Heart right ventricle (tissue), 16 donors: ENCODE measurements at regions of chr3 and their contacts with region 1.

Region 1: DNA sequence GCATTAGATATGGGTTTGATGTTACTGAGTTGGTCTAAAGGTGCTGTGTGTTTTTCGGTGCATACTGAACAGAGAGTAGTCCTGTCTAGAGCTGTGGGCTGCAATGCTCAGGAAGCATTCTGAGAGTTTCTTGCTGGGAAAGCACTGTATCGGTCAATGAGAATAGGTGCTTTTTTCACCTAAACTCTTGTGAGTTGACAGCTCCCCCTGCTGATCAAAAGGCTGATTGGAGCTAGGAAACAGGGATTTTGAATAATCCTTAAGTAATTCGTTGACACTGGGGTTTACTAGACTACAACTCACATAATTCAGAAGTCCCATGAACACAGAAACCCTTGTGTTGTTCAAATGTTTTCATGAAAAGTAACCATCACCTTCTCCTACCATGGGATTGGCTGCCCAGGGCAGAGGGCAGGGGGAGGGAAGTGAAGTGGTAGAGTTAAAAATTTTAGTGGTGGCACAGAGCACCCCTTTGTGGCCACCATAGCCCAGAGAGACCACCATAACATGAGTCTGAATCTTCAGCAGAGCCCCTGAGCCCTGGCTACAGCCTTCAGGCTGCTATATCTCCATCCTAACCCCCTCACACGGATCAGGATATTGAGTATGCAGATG is 13.0 kb upstream of the MANF start:
- DNase-seq: no peak
- ATAC-seq: peak in 3 of 8 donors; percentile 27 to 46 (median 44)
- H3K4me3 ChIP-seq: no peak overlapping the region
- H3K27ac ChIP-seq: no peak overlapping the region
- H3K4me1 ChIP-seq: no peaks in the 10 kb centered on the region
- H3K27me3 ChIP-seq: peaks cover 0 to 4% (median 0%) of the 10 kb centered on the region in 7 donors
- CTCF ChIP-seq: peak; percentile 16 to 71 (median 62)

Region 2: GRCh38 chr3:50568947-50569749 is 802.9 kb before region 1 on chr3 and contains the start of gene HEMK1:
- intact Hi-C with region 1: loop called in 1 of 10 experiments (anchors 5 kb)
- DNase-seq: peak; percentile 98 to 99
- ATAC-seq: peak; percentile 85 to 95 (median 90)
- H3K4me3 ChIP-seq: peak within 1 kb of the TSS; percentile 35 to 92 (median 78)
- H3K27ac ChIP-seq: peak within 1 kb of the TSS; percentile 85 to 95 (median 92)
- H3K4me1 ChIP-seq: peaks cover 11 to 69% (median 47%) of the 10 kb centered on the region in 9 donors
- H3K27me3 ChIP-seq: no peaks in the 10 kb centered on the region
- CTCF ChIP-seq: no peak
- total RNA-seq, gene HEMK1: 10.6 to 19.0 (median 14.8) TPM

Region 3: DNA sequence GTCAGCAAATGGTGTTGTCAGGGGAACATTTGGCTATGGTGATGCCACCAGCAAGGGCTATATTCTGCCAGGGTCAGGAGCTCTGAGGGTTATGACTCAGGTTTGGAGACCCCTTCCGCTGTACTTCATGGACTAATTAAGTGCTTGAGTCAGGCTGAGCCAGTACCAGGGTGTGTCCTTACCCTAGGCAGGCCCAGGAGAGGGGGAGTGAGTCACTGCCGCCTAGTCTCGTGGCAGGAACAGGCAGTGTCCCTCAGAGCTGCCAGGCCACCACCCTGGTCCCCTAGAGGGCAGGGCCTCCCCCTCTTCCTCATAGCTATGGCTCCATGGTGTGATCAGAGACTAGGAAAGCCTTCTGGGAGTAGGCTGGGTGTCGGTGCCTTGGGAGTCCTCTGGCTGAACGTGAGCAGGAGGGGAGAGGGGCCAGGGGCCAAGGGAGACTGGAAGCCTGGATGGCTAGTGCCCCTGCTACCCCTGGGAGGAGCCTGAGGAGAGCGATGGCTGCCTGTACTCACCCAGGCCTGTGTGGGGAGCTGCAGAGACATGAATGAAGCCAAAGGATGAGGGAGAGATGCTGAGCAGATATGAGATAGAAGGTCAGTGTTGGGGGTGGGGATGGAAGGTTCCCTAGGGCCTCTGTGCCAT is 744.5 kb before region 1 on chr3:
- intact Hi-C with region 1: loop called in 2 of 10 experiments (anchors 5 to 10 kb)
- DNase-seq: peak in 1 of 2 donors; percentile 56
- ATAC-seq: peak; percentile 36 to 94 (median 84)
- H3K4me3 ChIP-seq: no peak overlapping the region
- H3K27ac ChIP-seq: peak overlapping the region in 9 of 10 donors; percentile 47 to 97 (median 69)
- H3K4me1 ChIP-seq: peaks cover 15 to 100% (median 82%) of the 10 kb centered on the region in 9 donors
- H3K27me3 ChIP-seq: no peaks in the 10 kb centered on the region
- CTCF ChIP-seq: peak in 6 of 9 donors; percentile 17 to 54 (median 44)

Region 4: GRCh38 chr3:50961386-50961785 is 410.7 kb before region 1 on chr3:
- intact Hi-C with region 1: loop called in 1 of 10 experiments (anchors 10 kb)
- DNase-seq: no peak
- ATAC-seq: no peak
- H3K4me3 ChIP-seq: no peak overlapping the region
- H3K27ac ChIP-seq: no peak overlapping the region
- H3K4me1 ChIP-seq: no peaks in the 10 kb centered on the region
- H3K27me3 ChIP-seq: no peaks in the 10 kb centered on the region
- CTCF ChIP-seq: no peak

Region 5: GRCh38 chr3:50971487-50971924 is 400.5 kb before region 1 on chr3:
- intact Hi-C with region 1: loop called in 3 of 10 experiments (anchors 5 to 10 kb)
- DNase-seq: no peak
- ATAC-seq: peak in 6 of 8 donors; percentile 31 to 71 (median 49)
- H3K4me3 ChIP-seq: no peak overlapping the region
- H3K27ac ChIP-seq: no peak overlapping the region
- H3K4me1 ChIP-seq: peaks cover 0 to 4% (median 0%) of the 10 kb centered on the region in 9 donors
- H3K27me3 ChIP-seq: no peaks in the 10 kb centered on the region
- CTCF ChIP-seq: peak; percentile 41 to 80 (median 62)

Region 6: GRCh38 chr3:50986726-50987125 is 385.3 kb before region 1 on chr3:
- intact Hi-C with region 1: no loop called
- DNase-seq: no peak
- ATAC-seq: no peak
- H3K4me3 ChIP-seq: no peak overlapping the region
- H3K27ac ChIP-seq: no peak overlapping the region
- H3K4me1 ChIP-seq: no peaks in the 10 kb centered on the region
- H3K27me3 ChIP-seq: no peaks in the 10 kb centered on the region
- CTCF ChIP-seq: no peak

Region 7: DNA sequence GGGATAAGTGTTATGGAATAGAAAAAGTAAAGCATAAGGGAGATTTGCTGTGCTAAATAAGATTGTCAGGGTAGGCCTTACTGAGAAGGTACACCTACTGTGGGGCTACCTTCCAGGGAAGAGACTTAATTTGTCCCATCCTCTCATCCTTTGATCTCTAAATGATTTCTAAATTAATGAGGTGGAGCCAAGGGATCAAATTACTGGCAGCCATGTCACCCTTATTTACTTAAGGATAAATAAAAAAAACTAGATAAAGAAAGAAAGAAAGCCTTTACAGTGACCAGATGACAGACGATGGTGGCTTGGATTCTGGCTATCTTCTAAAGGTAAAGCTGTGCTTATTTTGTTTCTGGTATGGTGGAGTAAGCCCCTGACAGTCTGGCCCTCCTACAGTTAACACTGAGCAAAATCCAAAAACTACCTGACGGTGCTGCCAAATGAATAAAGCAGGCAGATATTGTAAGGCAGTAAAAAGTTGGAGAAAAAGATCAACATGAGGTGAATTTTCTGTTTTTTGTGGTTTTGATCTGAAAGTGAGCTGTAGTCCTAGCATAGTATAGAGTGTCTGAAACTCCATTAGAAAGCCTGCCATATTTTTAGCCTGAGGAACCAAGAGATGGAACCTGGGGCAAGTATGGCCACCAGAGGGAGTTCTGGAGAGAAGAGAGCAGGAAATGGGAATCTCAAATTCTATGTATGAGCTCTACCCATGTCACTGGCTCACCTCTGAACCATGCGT is 272.1 kb before region 1 on chr3:
- intact Hi-C with region 1: loop called in 3 of 10 experiments (anchors 5 to 10 kb)
- DNase-seq: peak in 1 of 2 donors; percentile 21
- ATAC-seq: peak in 4 of 8 donors; percentile 27 to 67 (median 60)
- H3K4me3 ChIP-seq: no peak overlapping the region
- H3K27ac ChIP-seq: no peak overlapping the region
- H3K4me1 ChIP-seq: no peaks in the 10 kb centered on the region
- H3K27me3 ChIP-seq: no peaks in the 10 kb centered on the region
- CTCF ChIP-seq: peak in 8 of 9 donors; percentile 34 to 74 (median 60)

Region 8: GRCh38 chr3:51429138-51429537 is 57.1 kb after region 1 on chr3:
- intact Hi-C with region 1: no loop called
- DNase-seq: no peak
- ATAC-seq: no peak
- H3K4me3 ChIP-seq: no peak overlapping the region
- H3K27ac ChIP-seq: no peak overlapping the region
- H3K4me1 ChIP-seq: no peaks in the 10 kb centered on the region
- H3K27me3 ChIP-seq: no peaks in the 10 kb centered on the region
- CTCF ChIP-seq: no peak